Left ventricle myocardium inferior (tissue), 1 donor: ENCODE measurements at regions of chr11 and their contacts with region 1.

Region 1: DNA sequence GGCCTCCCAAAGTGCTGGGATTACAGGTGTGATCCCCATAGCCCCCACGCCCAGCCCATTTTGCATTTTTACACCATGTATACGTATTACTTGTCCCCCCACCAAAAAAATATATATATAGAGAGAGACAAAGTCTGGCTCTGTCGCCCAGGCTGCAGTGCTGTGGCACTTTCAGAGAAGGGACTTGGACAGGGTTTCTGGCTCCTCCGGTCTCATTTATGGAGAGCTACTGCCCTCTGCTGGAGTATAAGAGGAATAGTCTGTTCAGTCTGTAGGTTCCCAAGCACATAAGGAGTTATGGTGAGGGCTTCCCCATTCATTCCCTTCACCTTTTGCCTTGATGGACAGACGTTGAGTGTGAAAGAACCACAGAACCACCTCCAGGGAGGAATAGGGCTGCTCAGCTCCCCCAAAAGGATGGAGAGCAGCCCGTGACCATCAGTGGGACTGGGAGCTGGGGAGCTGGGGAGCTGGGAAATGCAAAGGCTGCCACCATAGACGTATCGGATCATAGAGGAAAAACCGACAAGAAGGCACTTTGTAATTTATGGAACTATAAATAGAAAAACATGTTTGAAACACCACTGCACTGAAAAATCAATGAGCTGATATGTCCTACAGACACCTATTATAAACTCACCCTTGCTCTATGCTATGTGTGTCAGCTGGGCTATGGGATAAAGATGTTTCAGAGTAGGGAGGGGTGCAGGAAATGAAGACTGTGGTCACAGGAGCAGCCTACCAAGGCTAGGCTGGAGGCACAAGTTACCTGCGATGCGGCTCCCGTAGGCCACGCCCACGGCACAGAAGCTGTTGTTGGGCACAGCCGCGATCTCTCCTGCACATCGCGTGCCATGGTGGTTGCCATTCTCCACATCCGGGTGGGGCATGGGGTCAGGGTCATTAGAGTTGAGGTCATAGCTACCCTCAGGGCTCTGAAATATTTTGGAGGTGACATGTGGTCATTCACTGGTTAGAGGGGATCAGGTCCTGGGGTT is 5.2 kb downstream of the PCSK7 start:
- DNase-seq: no peak
- H3K4me3 ChIP-seq: no peak overlapping the region
- H3K27ac ChIP-seq: peak overlapping the region; percentile 32
- H3K4me1 ChIP-seq: peaks cover 40% of the 10 kb centered on the region
- H3K27me3 ChIP-seq: no peaks in the 10 kb centered on the region
- CTCF ChIP-seq: peak; percentile 90

Region 2: DNA sequence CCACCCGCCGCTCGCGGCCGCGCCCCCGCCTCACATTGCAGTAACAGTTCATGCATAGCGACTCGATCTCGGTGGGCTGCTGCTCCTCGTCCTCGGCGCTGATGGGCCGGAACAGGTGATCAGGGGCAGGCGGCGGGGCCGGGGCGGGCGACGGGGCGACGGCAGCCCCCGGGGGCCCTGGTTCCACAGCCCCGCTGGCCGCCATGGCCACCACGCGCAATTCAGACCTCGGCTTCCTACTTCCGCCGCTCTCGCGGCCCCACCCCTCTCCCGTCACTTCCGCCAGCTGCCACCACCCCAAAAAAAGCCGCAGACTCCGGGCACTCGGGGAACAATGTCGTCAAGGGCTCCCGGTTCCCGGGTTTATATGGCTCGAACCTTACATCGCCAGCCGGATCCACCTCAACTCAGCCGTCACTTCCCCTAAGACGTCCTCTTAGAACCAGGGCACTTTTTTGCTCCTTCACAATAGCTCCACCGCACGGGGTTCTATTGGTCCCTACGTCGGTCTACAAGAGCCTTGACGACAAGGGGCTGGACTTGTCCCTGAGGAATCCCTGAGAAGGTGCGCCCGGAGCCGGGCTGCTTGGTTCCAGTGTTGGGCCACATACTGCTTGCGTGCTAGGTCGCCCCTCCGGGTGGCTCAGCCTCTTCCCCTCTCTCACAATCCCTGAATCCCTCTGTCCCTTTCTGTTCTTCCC is 438.8 kb before region 1 on chr11 and contains the start of gene ZPR1:
- intact Hi-C with region 1: loop called (anchors 5 kb)
- DNase-seq: peak; percentile 88
- H3K4me3 ChIP-seq: peak within 1 kb of the TSS; percentile 85
- H3K27ac ChIP-seq: peak within 1 kb of the TSS; percentile 89
- H3K4me1 ChIP-seq: peaks cover 33% of the 10 kb centered on the region
- H3K27me3 ChIP-seq: no peaks in the 10 kb centered on the region
- CTCF ChIP-seq: peak; percentile 17
- total RNA-seq, gene ZPR1: 26.4 TPM

Region 3: GRCh38 chr11:117327567-117328374 is 101.1 kb after region 1 on chr11 and contains the start of gene CEP164:
- intact Hi-C with region 1: no loop called
- DNase-seq: peak; percentile 96
- H3K4me3 ChIP-seq: peak within 1 kb of the TSS; percentile 84
- H3K27ac ChIP-seq: peak within 1 kb of the TSS; percentile 92
- H3K4me1 ChIP-seq: peaks cover 19% of the 10 kb centered on the region
- H3K27me3 ChIP-seq: no peaks in the 10 kb centered on the region
- CTCF ChIP-seq: no peak
- total RNA-seq, gene CEP164: 5.9 TPM